Activated T-helper 1 cell treated with anti-CD3 and anti-CD28 coated beads, Interleukin-12 subunit alpha, Interleukin-12 subunit beta, Interleukin-2, Interleukin-4 antibody, amounts not matched to agents 30 ng/mL and 10 ng/mL and 1 ng/mL, durations not matched to agents 14 hours and 24 hours and 36 hours (primary cell): ENCODE measurements at regions of chr14 and their contacts with region 1.

Region 1: DNA sequence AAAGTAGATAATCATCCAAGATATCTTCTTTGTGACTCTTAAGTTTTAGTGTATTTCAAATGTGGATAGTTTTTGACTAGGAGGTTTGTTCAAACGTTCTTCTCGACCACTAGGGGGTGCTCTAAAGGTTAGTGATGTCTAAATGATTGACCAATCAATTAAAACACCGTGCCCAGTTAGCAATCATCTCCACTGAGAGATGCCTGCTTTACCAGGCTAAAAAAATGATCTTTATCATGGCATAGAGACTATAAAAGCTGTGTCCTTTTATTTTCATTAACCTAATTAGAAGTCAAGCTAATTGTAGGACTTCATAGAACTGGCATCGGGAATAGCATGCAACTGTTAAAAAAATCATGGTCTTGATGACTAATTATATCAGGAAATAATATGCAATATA is 153.9 kb downstream of the PRKCH start:
- DNase-seq: no peak
- H3K4me3 Mint-ChIP-seq: peak overlapping the region; percentile 39
- H3K27ac Mint-ChIP-seq: peak overlapping the region; percentile 83
- H3K4me1 Mint-ChIP-seq: peaks cover 96% of the 10 kb centered on the region
- H3K27me3 Mint-ChIP-seq: no peaks in the 10 kb centered on the region

Region 2: GRCh38 chr14:61326847-61327246 is 148.5 kb before region 1 on chr14:
- intact Hi-C with region 1: loop called (anchors 1 kb)
- DNase-seq: no peak
- H3K4me3 Mint-ChIP-seq: peak overlapping the region; percentile 93
- H3K27ac Mint-ChIP-seq: peak overlapping the region; percentile 86
- H3K4me1 Mint-ChIP-seq: peaks cover 77% of the 10 kb centered on the region
- H3K27me3 Mint-ChIP-seq: no peaks in the 10 kb centered on the region

Region 3: DNA sequence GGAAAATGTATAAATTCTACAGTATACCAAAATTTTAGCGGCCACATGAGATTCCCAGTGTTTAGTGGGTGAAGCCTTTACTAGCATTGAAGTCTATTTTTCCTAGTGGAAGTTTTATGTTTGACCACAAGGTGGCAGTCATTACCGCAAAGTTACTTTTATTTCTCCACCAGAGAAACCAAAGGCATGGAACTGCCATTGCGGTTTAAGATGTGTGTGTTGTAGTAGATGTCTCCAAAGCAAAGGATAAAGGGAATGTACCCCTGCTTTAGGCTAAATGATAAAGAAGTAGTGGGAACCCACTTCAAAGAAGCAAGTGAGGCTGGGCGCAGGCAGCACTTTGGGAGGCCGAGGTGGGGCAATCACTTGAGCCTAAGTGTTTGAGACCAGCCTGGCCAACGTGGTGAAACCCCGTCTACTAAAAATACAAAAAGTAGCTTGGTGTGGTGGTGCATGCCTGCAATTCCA is 13.5 kb before region 1 on chr14:
- intact Hi-C with region 1: loop called (anchors 1 kb)
- DNase-seq: no peak
- H3K4me3 Mint-ChIP-seq: peak overlapping the region; percentile 15
- H3K27ac Mint-ChIP-seq: peak overlapping the region; percentile 65
- H3K4me1 Mint-ChIP-seq: peaks cover 51% of the 10 kb centered on the region
- H3K27me3 Mint-ChIP-seq: no peaks in the 10 kb centered on the region

Region 4: GRCh38 chr14:61511558-61511924 is 36.2 kb after region 1 on chr14:
- intact Hi-C with region 1: loop called (anchors 1 kb)
- DNase-seq: peak; percentile 13
- H3K4me3 Mint-ChIP-seq: peak overlapping the region; percentile 64
- H3K27ac Mint-ChIP-seq: peak overlapping the region; percentile 88
- H3K4me1 Mint-ChIP-seq: peaks cover 83% of the 10 kb centered on the region
- H3K27me3 Mint-ChIP-seq: no peaks in the 10 kb centered on the region

Region 5: DNA sequence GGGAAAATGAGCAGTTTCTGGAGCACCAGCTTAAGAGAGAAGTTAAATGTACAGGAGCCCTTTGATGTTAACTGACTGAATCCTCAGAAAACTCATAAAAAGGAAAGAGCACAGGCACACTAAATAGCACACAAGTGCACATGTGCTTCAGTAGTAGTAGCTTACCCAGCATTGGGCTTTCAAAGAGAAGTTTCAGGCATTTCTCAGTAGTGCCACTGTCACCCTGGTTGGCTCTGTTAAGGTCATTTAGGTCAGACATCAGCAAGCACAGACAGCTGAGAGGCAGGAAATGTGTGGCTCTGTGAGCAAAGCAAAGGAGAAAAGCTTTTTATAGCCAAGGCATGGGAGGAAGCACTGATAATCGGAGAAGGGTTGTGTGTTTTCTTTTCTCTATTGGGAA is 123.7 kb after region 1 on chr14:
- intact Hi-C with region 1: loop called (anchors 1 kb)
- DNase-seq: peak; percentile 34
- H3K4me3 Mint-ChIP-seq: peak overlapping the region; percentile 45
- H3K27ac Mint-ChIP-seq: peak overlapping the region; percentile 85
- H3K4me1 Mint-ChIP-seq: peaks cover 73% of the 10 kb centered on the region
- H3K27me3 Mint-ChIP-seq: no peaks in the 10 kb centered on the region

Region 6: DNA sequence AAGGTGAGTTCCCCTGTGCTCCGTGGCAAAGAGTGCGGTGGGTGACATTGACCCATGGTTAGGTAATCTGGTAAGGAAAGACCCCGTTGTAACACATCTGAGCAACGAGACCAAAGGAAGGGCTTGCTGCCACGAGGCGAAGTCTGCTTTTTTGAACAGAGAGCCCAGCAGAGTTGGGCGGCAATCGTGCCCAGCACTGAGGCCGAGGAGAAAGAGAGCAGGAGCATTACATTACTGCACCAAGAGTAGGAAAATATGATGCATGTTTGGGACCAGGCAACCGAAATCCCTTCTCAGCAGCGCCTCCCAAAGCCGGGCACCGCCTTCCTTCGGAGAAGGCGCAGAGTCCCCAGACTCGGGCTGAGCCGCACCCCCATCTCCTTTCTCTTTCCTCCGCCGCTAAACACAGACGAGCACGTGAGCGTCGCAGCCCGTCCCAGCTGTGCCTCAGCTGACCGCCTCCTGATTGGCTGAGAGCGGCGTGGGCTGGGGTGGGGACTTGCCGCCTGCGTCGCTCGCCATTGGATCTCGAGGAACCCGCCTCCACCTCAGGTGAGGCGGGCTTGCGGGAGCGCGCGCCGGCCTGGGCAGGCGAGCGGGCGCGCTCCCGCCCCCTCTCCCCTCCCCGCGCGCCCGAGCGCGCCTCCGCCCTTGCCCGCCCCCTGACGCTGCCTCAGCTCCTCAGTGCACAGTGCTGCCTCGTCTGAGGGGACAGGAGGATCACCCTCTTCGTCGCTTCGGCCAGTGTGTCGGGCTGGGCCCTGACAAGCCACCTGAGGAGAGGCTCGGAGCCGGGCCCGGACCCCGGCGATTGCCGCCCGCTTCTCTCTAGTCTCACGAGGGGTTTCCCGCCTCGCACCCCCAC is 219.7 kb after region 1 on chr14 and contains the start of gene HIF1A:
- intact Hi-C with region 1: loop called (anchors 1 kb)
- DNase-seq: peak; percentile 95
- H3K4me3 Mint-ChIP-seq: peak within 1 kb of the TSS; percentile 94
- H3K27ac Mint-ChIP-seq: peak within 1 kb of the TSS; percentile 97
- H3K4me1 Mint-ChIP-seq: peaks cover 63% of the 10 kb centered on the region
- H3K27me3 Mint-ChIP-seq: no peaks in the 10 kb centered on the region
- total RNA-seq, gene HIF1A: 241 and 247 TPM in 2 replicates

Region 7: GRCh38 chr14:61761959-61762786 is 286.9 kb after region 1 on chr14 and contains the start of gene SNAPC1:
- intact Hi-C with region 1: loop called (anchors 1 kb)
- DNase-seq: peak; percentile 97
- H3K4me3 Mint-ChIP-seq: peak within 1 kb of the TSS; percentile 91
- H3K27ac Mint-ChIP-seq: peak within 1 kb of the TSS; percentile 90
- H3K4me1 Mint-ChIP-seq: peaks cover 59% of the 10 kb centered on the region
- H3K27me3 Mint-ChIP-seq: peaks cover 3% of the 10 kb centered on the region
- total RNA-seq, gene SNAPC1: 10.8 and 11.0 TPM in 2 replicates

Region 8: GRCh38 chr14:61841145-61841544 is 365.8 kb after region 1 on chr14:
- intact Hi-C with region 1: no loop called
- DNase-seq: no peak
- H3K4me3 Mint-ChIP-seq: no peak overlapping the region
- H3K27ac Mint-ChIP-seq: no peak overlapping the region
- H3K4me1 Mint-ChIP-seq: no peaks in the 10 kb centered on the region
- H3K27me3 Mint-ChIP-seq: peaks cover 26% of the 10 kb centered on the region